ENCODE measurements at regions of chr9 and their contacts with region 1.

Region 1: GRCh38 chr9:118459913-118460312 is 755.7 kb downstream of the TLR4 start:
- DNase-seq: peak in 1 of 2 donors; percentile 32
- H3K4me3 ChIP-seq: no peak overlapping the region
- H3K27ac ChIP-seq: peak overlapping the region in 1 of 2 donors; percentile 1
- H3K4me1 ChIP-seq: no peaks in the 10 kb centered on the region
- H3K27me3 ChIP-seq: no peaks in the 10 kb centered on the region
- CTCF ChIP-seq: no peak
- POLR2A ChIP-seq: no peak

Region 2: DNA sequence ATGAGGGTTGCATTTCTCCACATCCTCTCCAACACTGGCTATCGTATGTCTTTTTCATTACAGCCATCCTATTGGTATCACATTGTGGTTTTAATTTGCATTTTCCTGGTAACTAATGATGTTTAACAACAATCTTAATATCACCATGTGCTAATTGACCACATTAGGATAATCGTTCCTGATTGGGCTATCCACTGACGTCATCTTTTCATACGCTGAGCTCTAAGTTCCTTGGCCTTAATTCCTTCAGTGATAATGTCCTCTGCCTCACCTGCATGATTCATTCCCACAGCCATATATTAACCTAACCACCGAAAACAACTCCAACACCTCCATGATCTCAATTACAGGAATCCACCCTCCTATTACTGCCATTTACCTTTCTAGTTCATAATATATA is 1457.3 kb after region 1 on chr9:
- intact Hi-C with region 1: loop called (anchors 5 kb)
- DNase-seq: no peak
- H3K4me3 ChIP-seq: no peak overlapping the region
- H3K27ac ChIP-seq: no peak overlapping the region
- H3K4me1 ChIP-seq: no peaks in the 10 kb centered on the region
- H3K27me3 ChIP-seq: no peaks in the 10 kb centered on the region
- CTCF ChIP-seq: no peak
- POLR2A ChIP-seq: no peak